ENCODE measurements at regions of chr2 and their contacts with region 1.

Region 1: DNA sequence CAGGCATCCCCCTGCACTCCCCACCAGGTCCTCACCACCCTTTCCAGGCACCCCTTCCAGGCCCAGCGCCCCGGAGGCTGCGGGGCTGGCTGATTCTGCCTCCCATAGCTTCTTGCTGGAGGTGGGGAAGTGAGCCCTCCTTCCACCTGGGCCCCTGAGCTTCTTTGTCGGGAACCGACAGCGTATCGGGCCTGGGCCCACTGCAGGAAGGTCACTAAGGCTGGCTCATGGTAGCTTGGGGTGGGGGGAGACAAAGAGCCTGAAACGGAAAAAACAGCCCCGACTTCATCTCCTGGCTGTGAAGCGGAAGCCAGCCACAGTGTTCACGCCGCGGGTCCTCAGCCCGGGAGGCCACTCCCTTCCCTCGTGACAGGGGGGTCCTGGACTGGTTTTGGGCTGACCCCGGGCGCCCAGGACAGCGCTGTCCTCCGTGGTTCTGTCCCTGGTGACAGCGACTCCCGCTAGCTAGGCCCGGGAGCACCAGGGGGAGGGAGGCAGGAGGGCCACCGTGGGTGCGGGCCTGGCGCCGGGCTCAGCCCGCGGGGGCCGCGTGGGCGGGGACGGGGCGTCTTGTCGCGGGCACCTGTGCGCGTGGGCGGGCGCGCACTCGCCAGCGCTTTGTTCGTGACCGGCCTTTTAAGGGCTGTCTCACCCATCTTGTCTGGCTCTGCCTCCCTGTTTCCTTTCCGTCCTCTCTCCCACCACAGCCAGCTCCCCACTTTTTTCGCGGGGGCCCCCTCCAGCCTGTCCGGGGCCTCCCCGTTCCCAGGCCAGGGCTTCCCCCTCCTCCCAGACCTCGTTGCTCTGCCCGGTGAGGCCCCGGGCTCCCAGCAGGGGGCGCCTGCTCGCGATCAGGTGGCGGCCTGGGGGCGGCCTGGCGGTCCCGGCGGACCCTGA is 64.9 kb downstream of the DNMT3A start:
- DNase-seq: peak; percentile 69 to 79 (median 73)
- H3K4me3 ChIP-seq: peak overlapping the region; percentile 26 to 53
- H3K4me3 Mint-ChIP-seq: peak overlapping the region; percentile 67 to 81 (median 76)
- H3K27ac ChIP-seq: peak overlapping the region; percentile 89
- H3K27ac Mint-ChIP-seq: peak overlapping the region; percentile 93 to 99 (median 96)
- H3K4me1 ChIP-seq: peaks cover 73% of the 10 kb centered on the region
- H3K4me1 Mint-ChIP-seq: peaks cover 37 to 78% (median 61%) of the 10 kb centered on the region in 4 donors
- H3K27me3 ChIP-seq: no peaks in the 10 kb centered on the region
- H3K27me3 Mint-ChIP-seq: no peaks in the 10 kb centered on the region

Region 2: GRCh38 chr2:25063876-25064660 is 212.7 kb before region 1 on chr2:
- CTCF ChIA-PET with region 1: no interaction called
- POLR2A ChIA-PET with region 1: no interaction called
- intact Hi-C with region 1: no loop called
- DNase-seq: no peak
- H3K4me3 ChIP-seq: no peak overlapping the region
- H3K4me3 Mint-ChIP-seq: no peak overlapping the region
- H3K27ac ChIP-seq: no peak overlapping the region
- H3K27ac Mint-ChIP-seq: no peak overlapping the region
- H3K4me1 ChIP-seq: no peaks in the 10 kb centered on the region
- H3K4me1 Mint-ChIP-seq: no peaks in the 10 kb centered on the region
- H3K27me3 ChIP-seq: no peaks in the 10 kb centered on the region
- H3K27me3 Mint-ChIP-seq: peaks cover 0 to 3% of the 10 kb centered on the region in 2 donors

Region 3: DNA sequence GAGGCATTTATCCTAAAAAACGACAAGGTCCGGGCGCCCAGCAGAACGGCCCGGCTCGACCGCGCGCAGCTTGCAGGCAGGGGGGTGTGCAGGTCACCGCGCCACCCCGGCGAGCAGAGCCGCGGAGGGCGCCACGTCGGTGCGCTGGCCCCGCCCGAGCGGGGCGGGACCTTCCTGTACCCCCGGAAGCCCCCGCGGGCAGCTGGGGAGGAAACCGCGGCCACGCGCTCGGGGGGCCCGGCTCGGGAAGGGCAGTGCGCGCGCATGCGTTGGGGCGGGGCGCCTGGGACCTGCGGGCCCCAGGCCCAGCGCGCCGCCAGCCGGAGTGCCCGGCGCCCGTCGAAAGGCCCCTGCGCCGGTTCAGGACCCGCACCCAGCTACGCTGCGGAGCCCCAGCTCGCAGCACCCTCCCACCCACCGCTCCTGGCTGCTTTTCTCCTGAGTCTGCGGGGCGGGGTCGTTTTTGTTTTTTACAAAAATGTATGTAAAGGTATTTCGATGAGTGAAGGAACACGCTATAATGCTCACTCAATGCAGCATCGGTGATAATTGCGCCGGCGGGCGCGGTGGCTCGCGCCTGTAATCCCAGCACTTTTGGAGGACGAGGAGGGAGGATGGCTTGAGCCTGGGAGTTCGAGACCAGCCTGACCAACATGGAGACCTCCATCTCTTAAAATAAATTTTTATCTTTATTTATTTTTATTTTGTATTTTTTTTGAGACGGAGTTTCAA is 60.7 kb before region 1 on chr2:
- CTCF ChIA-PET with region 1: no interaction called
- POLR2A ChIA-PET with region 1: interaction called, 22 read pairs
- intact Hi-C with region 1: loop called (anchors 5 kb)
- DNase-seq: peak; percentile 78 to 87 (median 86)
- H3K4me3 ChIP-seq: peak overlapping the region; percentile 51 to 61
- H3K4me3 Mint-ChIP-seq: peak overlapping the region; percentile 81 to 89 (median 83)
- H3K27ac ChIP-seq: peak overlapping the region; percentile 55
- H3K27ac Mint-ChIP-seq: peak overlapping the region; percentile 67 to 93 (median 86)
- H3K4me1 ChIP-seq: peaks cover 9% of the 10 kb centered on the region
- H3K4me1 Mint-ChIP-seq: peaks cover 6 to 29% (median 14%) of the 10 kb centered on the region in 4 donors
- H3K27me3 ChIP-seq: no peaks in the 10 kb centered on the region
- H3K27me3 Mint-ChIP-seq: no peaks in the 10 kb centered on the region

Region 4: GRCh38 chr2:25252281-25253105 is 24.3 kb before region 1 on chr2:
- CTCF ChIA-PET with region 1: interaction called, 22 read pairs
- POLR2A ChIA-PET with region 1: interaction called, 78 read pairs
- intact Hi-C with region 1: loop called (anchors 1 kb)
- DNase-seq: peak in 4 of 5 donors; percentile 45 to 72 (median 48)
- H3K4me3 ChIP-seq: peak overlapping the region in 1 of 2 donors; percentile 56
- H3K4me3 Mint-ChIP-seq: peak overlapping the region; percentile 73 to 86 (median 82)
- H3K27ac ChIP-seq: peak overlapping the region; percentile 59
- H3K27ac Mint-ChIP-seq: peak overlapping the region; percentile 57 to 91 (median 80)
- H3K4me1 ChIP-seq: peaks cover 19% of the 10 kb centered on the region
- H3K4me1 Mint-ChIP-seq: peaks cover 16 to 51% (median 32%) of the 10 kb centered on the region in 4 donors
- H3K27me3 ChIP-seq: no peaks in the 10 kb centered on the region
- H3K27me3 Mint-ChIP-seq: no peaks in the 10 kb centered on the region

Region 5: GRCh38 chr2:25301453-25302352 is 24.9 kb after region 1 on chr2:
- CTCF ChIA-PET with region 1: interaction called, 25 read pairs
- POLR2A ChIA-PET with region 1: interaction called, 25 read pairs
- intact Hi-C with region 1: no loop called
- DNase-seq: peak in 3 of 5 donors; percentile 31 to 83 (median 38)
- H3K4me3 ChIP-seq: no peak overlapping the region
- H3K4me3 Mint-ChIP-seq: peak overlapping the region in 7 of 8 donors; percentile 15 to 74 (median 32)
- H3K27ac ChIP-seq: peak overlapping the region; percentile 41
- H3K27ac Mint-ChIP-seq: peak overlapping the region; percentile 76 to 97 (median 84)
- H3K4me1 ChIP-seq: peaks cover 51% of the 10 kb centered on the region
- H3K4me1 Mint-ChIP-seq: peaks cover 25 to 54% (median 42%) of the 10 kb centered on the region in 4 donors
- H3K27me3 ChIP-seq: no peaks in the 10 kb centered on the region
- H3K27me3 Mint-ChIP-seq: no peaks in the 10 kb centered on the region

Region 6: DNA sequence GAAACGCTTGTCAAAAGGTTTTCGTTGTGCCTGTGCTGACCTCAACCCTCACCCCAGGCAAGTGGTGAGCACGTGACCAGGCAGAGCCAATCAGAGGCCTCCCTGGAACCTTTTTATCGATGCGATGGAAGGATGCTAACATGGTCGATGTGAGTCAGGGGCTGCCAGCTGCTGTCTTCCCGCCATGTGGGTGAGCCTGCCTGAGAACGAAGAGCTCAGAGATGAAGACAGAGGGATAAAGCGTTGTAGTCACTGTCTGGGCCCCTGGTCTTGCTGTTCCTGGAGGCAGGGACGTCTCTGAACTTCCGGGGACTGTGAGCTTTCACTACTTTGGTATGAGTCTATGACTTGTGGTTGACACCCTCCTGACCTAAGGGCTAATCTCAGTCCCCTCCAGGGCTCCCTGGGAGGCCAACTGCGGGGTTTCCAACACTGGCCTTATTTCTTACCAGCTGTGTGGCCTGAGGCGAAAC is 46.3 kb after region 1 on chr2:
- CTCF ChIA-PET with region 1: interaction called, 12 read pairs
- POLR2A ChIA-PET with region 1: interaction called, 11 read pairs
- intact Hi-C with region 1: no loop called
- DNase-seq: peak; percentile 51 to 79 (median 64)
- H3K4me3 ChIP-seq: peak overlapping the region in 1 of 2 donors; percentile 46
- H3K4me3 Mint-ChIP-seq: peak overlapping the region; percentile 85 to 91 (median 88)
- H3K27ac ChIP-seq: peak overlapping the region; percentile 53
- H3K27ac Mint-ChIP-seq: peak overlapping the region; percentile 81 to 98 (median 94)
- H3K4me1 ChIP-seq: peaks cover 33% of the 10 kb centered on the region
- H3K4me1 Mint-ChIP-seq: peaks cover 33 to 51% (median 39%) of the 10 kb centered on the region in 4 donors
- H3K27me3 ChIP-seq: no peaks in the 10 kb centered on the region
- H3K27me3 Mint-ChIP-seq: no peaks in the 10 kb centered on the region

Region 7: DNA sequence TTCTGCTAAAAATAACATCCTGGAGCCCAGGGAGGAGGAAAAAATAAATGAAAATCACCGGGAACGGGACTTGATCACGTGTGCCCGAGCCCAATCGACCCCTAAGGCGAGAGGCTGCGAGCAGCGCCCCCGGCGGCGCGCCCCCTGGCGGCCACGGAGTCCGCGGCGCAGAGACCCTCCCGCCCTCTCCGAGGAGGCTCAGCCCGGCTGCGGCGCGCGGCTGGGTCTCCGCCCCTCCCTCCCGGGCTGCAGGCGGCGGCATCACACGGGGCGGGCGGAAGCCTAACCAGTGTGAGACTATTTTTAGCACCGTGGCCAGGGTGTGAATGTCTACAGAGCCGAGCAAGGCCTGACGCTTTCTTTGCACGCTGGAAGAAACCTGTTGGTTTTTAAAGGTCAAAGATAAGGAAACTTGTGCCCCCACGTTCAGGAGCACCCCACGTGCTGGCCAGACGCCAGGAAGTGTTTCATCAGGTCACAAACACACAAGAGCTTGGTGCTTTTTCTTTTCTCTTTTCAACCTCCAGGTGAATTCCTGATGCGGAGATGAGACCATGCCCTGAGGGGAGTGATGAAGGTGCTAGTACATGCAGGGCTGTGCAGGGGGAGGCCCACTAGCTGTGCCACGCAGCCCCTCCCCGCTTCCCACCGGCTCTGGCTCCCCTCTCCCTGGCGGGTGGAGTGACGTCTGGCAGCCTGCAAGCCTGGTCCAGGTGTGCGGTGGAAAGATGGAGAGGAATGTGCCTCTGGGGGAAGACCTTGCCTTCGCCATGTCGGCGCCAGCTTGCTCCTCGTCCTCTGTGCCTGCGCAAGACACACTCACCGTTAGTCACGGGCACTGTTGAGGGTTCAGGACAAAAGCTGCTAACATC is 100.2 kb after region 1 on chr2:
- CTCF ChIA-PET with region 1: interaction called, 7 read pairs
- POLR2A ChIA-PET with region 1: interaction called, 4 read pairs
- intact Hi-C with region 1: loop called (anchors 5 kb)
- DNase-seq: peak; percentile 92 to 95 (median 92)
- H3K4me3 ChIP-seq: peak overlapping the region in 1 of 2 donors; percentile 36
- H3K4me3 Mint-ChIP-seq: peak overlapping the region; percentile 48 to 85 (median 74)
- H3K27ac ChIP-seq: peak overlapping the region; percentile 57
- H3K27ac Mint-ChIP-seq: peak overlapping the region; percentile 90 to 96 (median 94)
- H3K4me1 ChIP-seq: peaks cover 38% of the 10 kb centered on the region
- H3K4me1 Mint-ChIP-seq: peaks cover 19 to 36% (median 23%) of the 10 kb centered on the region in 4 donors
- H3K27me3 ChIP-seq: no peaks in the 10 kb centered on the region
- H3K27me3 Mint-ChIP-seq: no peaks in the 10 kb centered on the region